ENCODE measurements at regions of chr15 and their contacts with region 1.

Region 1: GRCh38 chr15:97817276-97817890 is 143.1 kb upstream of the ARRDC4 start:
- DNase-seq: no peak
- ATAC-seq: no peak
- H3K4me3 ChIP-seq: no peak overlapping the region
- H3K27ac ChIP-seq: no peak overlapping the region
- H3K4me1 ChIP-seq: no peaks in the 10 kb centered on the region
- H3K27me3 ChIP-seq: no peaks in the 10 kb centered on the region
- CTCF ChIP-seq: no peak
- POLR2A ChIP-seq: no peak
- RAD21 ChIP-seq: no peak

Region 2: GRCh38 chr15:97837896-97838295 is 20.5 kb after region 1 on chr15:
- CTCF ChIA-PET with region 1: no interaction called
- POLR2A ChIA-PET with region 1: no interaction called
- RAD21 ChIA-PET with region 1: no interaction called
- intact Hi-C with region 1: loop called (anchors 2 kb)
- DNase-seq: no peak
- ATAC-seq: no peak
- H3K4me3 ChIP-seq: no peak overlapping the region
- H3K27ac ChIP-seq: no peak overlapping the region
- H3K4me1 ChIP-seq: no peaks in the 10 kb centered on the region
- H3K27me3 ChIP-seq: no peaks in the 10 kb centered on the region
- CTCF ChIP-seq: no peak
- POLR2A ChIP-seq: no peak
- RAD21 ChIP-seq: no peak